Activated naive CD4-positive, alpha-beta T cell treated with anti-CD3 and anti-CD28 coated beads, Interleukin-2, amount 10 ng/mL, durations not matched to agents 7 days and 5 days (primary cell): ENCODE measurements at regions of chr7 and their contacts with region 1.

Region 1: DNA sequence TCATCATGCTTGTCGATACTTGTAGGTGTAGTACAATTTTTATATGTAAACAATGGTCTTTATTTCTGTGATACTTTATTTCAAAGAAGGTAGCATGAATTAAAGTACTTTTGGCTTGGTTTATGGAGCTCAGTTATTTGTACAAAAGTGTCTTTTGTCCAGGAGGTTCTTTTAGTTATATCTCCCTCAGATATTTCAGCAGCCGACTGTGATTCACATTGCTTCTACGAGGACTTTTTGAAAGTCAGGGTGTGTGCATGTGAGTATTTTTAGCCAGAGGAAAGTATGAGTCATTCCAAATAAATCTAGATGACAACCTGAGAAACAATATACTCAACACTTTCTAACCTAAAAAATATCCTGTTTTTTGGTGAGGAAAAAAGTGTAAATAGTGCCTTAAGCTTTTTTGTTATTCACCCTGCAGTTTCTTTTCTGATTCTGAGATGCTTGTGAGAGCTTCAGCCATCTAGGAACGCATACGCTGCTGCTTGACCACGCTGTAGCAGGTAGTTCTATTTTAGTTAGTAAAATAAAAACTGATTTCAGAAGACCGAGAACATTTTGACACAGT is 595 bp upstream of the SUN1 start:
- DNase-seq: peak; percentile 39
- H3K4me3 Mint-ChIP-seq: peak overlapping the region; percentile 70
- H3K27ac Mint-ChIP-seq: peak overlapping the region; percentile 95
- H3K4me1 Mint-ChIP-seq: peaks cover 71% of the 10 kb centered on the region
- H3K27me3 Mint-ChIP-seq: no peaks in the 10 kb centered on the region

Region 2: GRCh38 chr7:650339-651031 is 181.2 kb before region 1 on chr7:
- CTCF ChIA-PET with region 1: no interaction called
- DNase-seq: no peak
- H3K4me3 Mint-ChIP-seq: no peak overlapping the region
- H3K27ac Mint-ChIP-seq: no peak overlapping the region
- H3K4me1 Mint-ChIP-seq: no peaks in the 10 kb centered on the region
- H3K27me3 Mint-ChIP-seq: no peaks in the 10 kb centered on the region

Region 3: DNA sequence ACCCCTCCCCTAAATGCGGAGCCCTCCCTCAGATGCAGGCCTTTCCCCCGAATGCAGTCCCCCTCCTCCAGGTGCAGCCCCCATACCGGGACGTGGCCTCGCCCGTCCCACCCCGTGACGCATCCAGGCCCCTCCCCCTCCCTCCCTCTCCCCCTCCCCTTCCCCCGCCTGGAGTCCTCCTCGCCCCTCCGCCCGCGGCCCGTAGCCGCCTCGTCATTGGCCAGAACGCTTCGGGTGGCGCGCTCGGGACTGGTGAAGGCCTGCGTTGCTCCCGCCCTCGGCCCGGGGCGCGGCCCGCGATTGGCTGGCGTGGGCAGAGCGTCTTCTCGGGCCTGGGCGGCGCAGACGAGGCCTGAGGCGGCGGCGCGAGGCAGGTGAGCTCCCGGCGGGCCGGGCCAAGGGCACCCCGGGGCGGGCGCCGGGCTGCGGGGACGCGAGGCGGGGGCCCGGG is 15.4 kb before region 1 on chr7:
- CTCF ChIA-PET with region 1: interaction called, 22 read pairs
- DNase-seq: peak; percentile 98
- H3K4me3 Mint-ChIP-seq: peak overlapping the region; percentile 79
- H3K27ac Mint-ChIP-seq: no peak overlapping the region
- H3K4me1 Mint-ChIP-seq: peaks cover 64% of the 10 kb centered on the region
- H3K27me3 Mint-ChIP-seq: peaks cover 52% of the 10 kb centered on the region